ENCODE measurements at regions of chr11 and their contacts with region 1.

Region 1: DNA sequence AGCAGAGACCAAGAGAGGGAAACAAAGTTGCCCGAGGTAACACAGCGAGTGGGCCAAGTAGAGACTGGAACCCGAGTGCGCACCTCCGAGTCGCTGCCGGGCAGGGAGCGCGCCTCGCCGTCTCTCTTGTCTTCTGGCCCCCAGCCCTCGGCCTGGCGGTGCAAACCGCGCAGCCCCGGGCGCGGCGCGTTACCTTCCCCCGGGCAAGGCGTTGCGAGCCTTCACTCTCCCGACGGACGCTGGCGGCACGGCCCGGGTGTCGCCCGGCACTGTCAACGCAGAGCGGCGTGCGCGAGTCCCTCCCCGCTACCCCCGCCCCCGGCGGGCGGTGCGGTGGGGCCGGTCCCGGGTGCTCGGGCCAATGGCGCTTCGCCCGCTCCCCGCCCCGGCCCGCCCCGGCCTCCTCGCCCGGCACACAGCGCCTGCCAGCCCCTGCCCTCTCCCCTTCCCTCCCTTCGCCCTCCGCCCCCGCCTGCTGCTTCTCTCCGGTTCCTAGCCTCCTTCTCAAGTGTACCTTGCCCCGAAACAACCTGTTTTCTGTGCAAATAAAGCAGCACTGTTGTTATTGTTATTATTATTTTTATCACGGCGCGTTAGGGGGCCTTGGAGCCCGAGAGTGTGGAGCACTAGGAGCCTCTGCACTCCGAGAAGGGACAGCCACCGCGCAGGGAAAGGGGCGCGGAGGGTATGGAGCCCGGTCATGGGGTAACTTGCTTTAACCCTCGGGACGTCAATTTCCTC is at the start of gene SYTL2:
- DNase-seq: peak; percentile 84 to 93
- H3K4me3 ChIP-seq: peak within 1 kb of the TSS; percentile 91
- H3K4me3 Mint-ChIP-seq: peak within 1 kb of the TSS; percentile 80
- H3K27ac Mint-ChIP-seq: peak within 1 kb of the TSS; percentile 44
- H3K4me1 ChIP-seq: peaks cover 29% of the 10 kb centered on the region
- H3K4me1 Mint-ChIP-seq: peaks cover 51% of the 10 kb centered on the region
- H3K27me3 ChIP-seq: no peaks in the 10 kb centered on the region
- H3K27me3 Mint-ChIP-seq: no peaks in the 10 kb centered on the region
- CTCF ChIP-seq: peak in 1 of 2 experiments; percentile 33
- total RNA-seq, gene SYTL2: 110 and 156 TPM in 2 replicates

Region 2: GRCh38 chr11:85694386-85694980 is 116.6 kb before region 1 on chr11:
- CTCF ChIA-PET with region 1: interaction called, 4 read pairs
- POLR2A ChIA-PET with region 1: interaction called, 4 read pairs
- intact Hi-C with region 1: loop called (anchors 1 kb)
- DNase-seq: peak in 1 of 2 experiments; percentile 59
- H3K4me3 ChIP-seq: no peak overlapping the region
- H3K4me3 Mint-ChIP-seq: no peak overlapping the region
- H3K27ac Mint-ChIP-seq: no peak overlapping the region
- H3K4me1 ChIP-seq: no peaks in the 10 kb centered on the region
- H3K4me1 Mint-ChIP-seq: no peaks in the 10 kb centered on the region
- H3K27me3 ChIP-seq: no peaks in the 10 kb centered on the region
- H3K27me3 Mint-ChIP-seq: no peaks in the 10 kb centered on the region
- CTCF ChIP-seq: peak; percentile 79 to 85

Region 3: GRCh38 chr11:85725510-85726258 is 85.4 kb before region 1 on chr11:
- CTCF ChIA-PET with region 1: no interaction called
- POLR2A ChIA-PET with region 1: no interaction called
- intact Hi-C with region 1: no loop called
- DNase-seq: no peak
- H3K4me3 ChIP-seq: no peak overlapping the region
- H3K4me3 Mint-ChIP-seq: no peak overlapping the region
- H3K27ac Mint-ChIP-seq: peak overlapping the region; percentile 32
- H3K4me1 ChIP-seq: peaks cover 13% of the 10 kb centered on the region
- H3K4me1 Mint-ChIP-seq: peaks cover 18% of the 10 kb centered on the region
- H3K27me3 ChIP-seq: no peaks in the 10 kb centered on the region
- H3K27me3 Mint-ChIP-seq: no peaks in the 10 kb centered on the region
- CTCF ChIP-seq: no peak

Region 4: GRCh38 chr11:85779956-85780640 is 30.9 kb before region 1 on chr11:
- CTCF ChIA-PET with region 1: interaction called, 10 read pairs
- POLR2A ChIA-PET with region 1: no interaction called
- intact Hi-C with region 1: loop called (anchors 1 kb)
- DNase-seq: peak; percentile 79 to 89
- H3K4me3 ChIP-seq: no peak overlapping the region
- H3K4me3 Mint-ChIP-seq: peak overlapping the region; percentile 44
- H3K27ac Mint-ChIP-seq: peak overlapping the region; percentile 74
- H3K4me1 ChIP-seq: peaks cover 65% of the 10 kb centered on the region
- H3K4me1 Mint-ChIP-seq: peaks cover 64% of the 10 kb centered on the region
- H3K27me3 ChIP-seq: no peaks in the 10 kb centered on the region
- H3K27me3 Mint-ChIP-seq: no peaks in the 10 kb centered on the region
- CTCF ChIP-seq: no peak

Region 5: GRCh38 chr11:85826116-85826855 is 15.2 kb after region 1 on chr11:
- CTCF ChIA-PET with region 1: interaction called, 46 read pairs
- POLR2A ChIA-PET with region 1: interaction called, 3 read pairs
- intact Hi-C with region 1: loop called (anchors 1 kb)
- DNase-seq: peak; percentile 78 to 80
- H3K4me3 ChIP-seq: no peak overlapping the region
- H3K4me3 Mint-ChIP-seq: peak overlapping the region; percentile 14
- H3K27ac Mint-ChIP-seq: peak overlapping the region; percentile 17
- H3K4me1 ChIP-seq: peaks cover 47% of the 10 kb centered on the region
- H3K4me1 Mint-ChIP-seq: peaks cover 37% of the 10 kb centered on the region
- H3K27me3 ChIP-seq: no peaks in the 10 kb centered on the region
- H3K27me3 Mint-ChIP-seq: no peaks in the 10 kb centered on the region
- CTCF ChIP-seq: peak; percentile 75 to 90